IMR-90 (cell line): ENCODE measurements at regions of chr16 and their contacts with region 1.

Region 1: GRCh38 chr16:69112285-69113129 is 7.1 kb downstream of the HAS3 start:
- DNase-seq: peak; percentile 25
- ATAC-seq: peak; percentile 87
- H3K4me3 ChIP-seq: no peak overlapping the region
- H3K27ac ChIP-seq: no peak overlapping the region
- H3K4me1 ChIP-seq: no peaks in the 10 kb centered on the region
- H3K27me3 ChIP-seq: no peaks in the 10 kb centered on the region
- CTCF ChIP-seq: peak; percentile 57
- POLR2A ChIP-seq: no peak
- RAD21 ChIP-seq: peak; percentile 51; the same call in 1 of the 2 replicates

Region 2: GRCh38 chr16:68972720-68973119 is 139.8 kb before region 1 on chr16:
- CTCF ChIA-PET with region 1: no interaction called
- POLR2A ChIA-PET with region 1: no interaction called
- dilution Hi-C with region 1: no loop called
- in situ Hi-C with region 1: loop called (anchors 10 kb)
- intact Hi-C with region 1: no loop called
- DNase-seq: peak; percentile 70
- ATAC-seq: peak; percentile 79
- H3K4me3 ChIP-seq: no peak overlapping the region
- H3K27ac ChIP-seq: no peak overlapping the region
- H3K4me1 ChIP-seq: peaks cover 2% of the 10 kb centered on the region; the same call in 1 of the 2 replicates
- H3K27me3 ChIP-seq: no peaks in the 10 kb centered on the region
- CTCF ChIP-seq: peak; percentile 52
- POLR2A ChIP-seq: no peak
- RAD21 ChIP-seq: peak; percentile 67

Region 3: DNA sequence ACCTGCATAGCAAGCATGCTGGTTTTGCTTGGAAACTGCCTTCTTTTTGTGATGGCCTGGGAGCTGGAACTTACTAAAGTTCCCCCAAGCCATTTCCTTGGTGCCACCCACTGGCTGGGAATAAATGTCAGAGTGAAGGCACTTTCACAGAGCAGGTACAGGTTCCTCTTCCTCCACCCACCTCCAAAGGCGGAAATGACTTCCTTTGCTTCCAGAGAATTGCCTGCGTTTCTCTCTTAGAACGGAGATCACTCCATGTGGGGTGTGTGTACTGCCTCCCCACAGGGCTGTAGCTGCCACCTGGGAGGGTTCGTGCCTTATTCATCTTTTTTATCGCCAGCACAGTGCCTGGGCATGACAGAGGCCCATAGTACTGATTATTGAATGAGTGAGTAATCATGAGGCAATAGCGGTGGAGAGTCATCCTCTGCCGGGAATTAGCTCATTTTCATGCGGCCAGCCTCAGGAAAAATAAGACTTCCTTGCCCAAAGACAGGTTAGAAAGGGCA is 39.3 kb before region 1 on chr16:
- CTCF ChIA-PET with region 1: no interaction called
- POLR2A ChIA-PET with region 1: no interaction called
- dilution Hi-C with region 1: no loop called
- in situ Hi-C with region 1: no loop called
- intact Hi-C with region 1: no loop called
- DNase-seq: peak; percentile 92
- ATAC-seq: peak; percentile 90
- H3K4me3 ChIP-seq: no peak overlapping the region
- H3K27ac ChIP-seq: no peak overlapping the region
- H3K4me1 ChIP-seq: peaks cover 5% of the 10 kb centered on the region
- H3K27me3 ChIP-seq: no peaks in the 10 kb centered on the region
- CTCF ChIP-seq: no peak
- POLR2A ChIP-seq: no peak
- RAD21 ChIP-seq: no peak

Region 4: DNA sequence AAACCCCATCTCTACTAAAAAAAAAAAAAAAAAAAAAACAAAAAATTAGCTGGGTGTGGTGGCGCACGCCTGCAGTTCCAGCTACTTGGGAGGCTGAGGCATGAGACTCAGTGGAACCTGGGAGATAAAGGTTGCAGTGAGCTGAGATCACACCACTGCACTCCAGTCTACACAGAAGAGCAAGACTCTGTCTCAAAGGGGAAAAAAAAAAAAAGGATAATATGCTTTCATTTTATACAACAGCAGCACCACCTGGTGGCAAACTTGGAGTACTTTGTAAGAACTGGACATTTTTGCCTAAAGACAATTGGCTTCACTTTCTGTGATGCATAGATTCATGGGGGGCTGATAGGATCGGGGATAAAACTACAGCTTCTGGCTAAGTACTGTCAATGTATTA is 11.4 kb after region 1 on chr16:
- CTCF ChIA-PET with region 1: no interaction called
- POLR2A ChIA-PET with region 1: no interaction called
- dilution Hi-C with region 1: no loop called
- in situ Hi-C with region 1: no loop called
- intact Hi-C with region 1: no loop called
- DNase-seq: peak; percentile 76
- ATAC-seq: peak; percentile 81
- H3K4me3 ChIP-seq: no peak overlapping the region
- H3K27ac ChIP-seq: no peak overlapping the region
- H3K4me1 ChIP-seq: no peaks in the 10 kb centered on the region
- H3K27me3 ChIP-seq: no peaks in the 10 kb centered on the region
- CTCF ChIP-seq: peak; percentile 81
- POLR2A ChIP-seq: 0 out of 2 replicates have a peak, but pooled peaks have one; percentile 30
- RAD21 ChIP-seq: peak; percentile 86

Region 5: GRCh38 chr16:69186642-69187445 is 74.3 kb after region 1 on chr16 and contains the start of gene SNTB2:
- CTCF ChIA-PET with region 1: no interaction called
- POLR2A ChIA-PET with region 1: no interaction called
- dilution Hi-C with region 1: no loop called
- in situ Hi-C with region 1: no loop called
- intact Hi-C with region 1: no loop called
- DNase-seq: peak; percentile 83
- ATAC-seq: peak; percentile 95
- H3K4me3 ChIP-seq: peak within 1 kb of the TSS; percentile 83
- H3K27ac ChIP-seq: peak within 1 kb of the TSS; percentile 98
- H3K4me1 ChIP-seq: peaks cover 13% of the 10 kb centered on the region
- H3K27me3 ChIP-seq: no peaks in the 10 kb centered on the region
- CTCF ChIP-seq: no peak
- POLR2A ChIP-seq: peak; percentile 84
- RAD21 ChIP-seq: peak; percentile 17; the same call in 1 of the 2 replicates
- total RNA-seq, gene SNTB2: 47.5 and 58.0 TPM in 2 replicates

Region 6: DNA sequence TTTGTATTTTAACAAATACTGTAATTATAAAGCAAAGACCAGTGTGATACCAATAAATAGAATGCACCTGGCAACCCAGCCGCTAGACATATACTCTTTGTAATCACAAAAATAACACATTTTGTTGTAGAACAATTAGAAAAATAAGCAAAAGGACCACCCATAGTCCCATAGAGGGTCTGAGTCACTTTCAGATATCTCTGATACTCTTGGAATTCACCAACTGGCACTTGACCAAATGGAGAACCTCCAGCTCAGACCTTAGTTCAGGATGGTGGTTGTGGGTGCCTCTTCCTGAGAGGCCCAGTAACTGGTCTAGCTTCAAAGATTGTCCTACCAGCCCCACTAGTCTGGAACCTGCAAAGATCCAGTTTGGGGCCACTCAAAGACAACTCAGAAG is 274.1 kb after region 1 on chr16:
- CTCF ChIA-PET with region 1: no interaction called
- POLR2A ChIA-PET with region 1: no interaction called
- dilution Hi-C with region 1: no loop called
- in situ Hi-C with region 1: no loop called
- intact Hi-C with region 1: no loop called
- DNase-seq: peak; percentile 39
- ATAC-seq: no peak
- H3K4me3 ChIP-seq: no peak overlapping the region
- H3K27ac ChIP-seq: no peak overlapping the region
- H3K4me1 ChIP-seq: no peaks in the 10 kb centered on the region; the same call in 1 of the 2 replicates
- H3K27me3 ChIP-seq: no peaks in the 10 kb centered on the region
- CTCF ChIP-seq: no peak
- POLR2A ChIP-seq: no peak
- RAD21 ChIP-seq: no peak